A673 (cell line): ENCODE measurements at regions of chr1 and their contacts with region 1.

Region 1: GRCh38 chr1:115771847-115772457 is 3.4 kb upstream of the CASQ2 start:
- DNase-seq: peak; percentile 85
- H3K4me3 ChIP-seq: no peak overlapping the region
- H3K27ac ChIP-seq: no peak overlapping the region
- H3K4me1 ChIP-seq: no peaks in the 10 kb centered on the region
- H3K27me3 ChIP-seq: peaks cover 4% of the 10 kb centered on the region
- CTCF ChIP-seq: peak; percentile 77

Region 2: DNA sequence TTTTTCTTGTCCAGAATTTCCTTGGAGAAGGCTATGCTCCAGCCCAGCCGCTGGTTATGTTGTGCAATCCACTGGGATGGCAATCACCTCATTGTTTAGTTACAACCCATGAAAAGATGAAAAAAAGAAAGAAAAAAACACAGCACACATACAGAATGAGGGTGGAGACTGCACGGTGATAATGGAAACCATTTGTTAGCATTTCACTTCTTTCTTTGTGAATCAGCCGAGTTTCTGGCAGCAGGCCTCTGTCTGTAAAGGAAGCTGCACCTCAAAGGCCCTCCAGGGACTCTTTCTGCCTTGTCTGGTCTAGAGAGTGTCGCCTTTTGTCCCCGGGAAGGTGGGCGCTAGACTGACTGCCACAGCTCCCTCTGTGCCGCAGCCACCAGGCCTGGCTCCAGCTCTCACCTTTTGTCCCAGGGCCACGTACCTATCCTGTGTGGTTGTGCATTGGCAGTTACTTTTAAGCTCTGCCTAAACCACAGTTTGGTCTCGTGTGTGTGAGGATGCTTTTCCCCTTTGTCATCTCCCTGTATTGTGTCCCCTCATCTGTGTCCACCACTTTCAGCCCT is 469.5 kb before region 1 on chr1:
- CTCF ChIA-PET with region 1: no interaction called
- POLR2A ChIA-PET with region 1: no interaction called
- intact Hi-C with region 1: no loop called
- DNase-seq: peak; percentile 42
- H3K4me3 ChIP-seq: no peak overlapping the region
- H3K27ac ChIP-seq: no peak overlapping the region
- H3K4me1 ChIP-seq: peaks cover 4% of the 10 kb centered on the region
- H3K27me3 ChIP-seq: no peaks in the 10 kb centered on the region
- CTCF ChIP-seq: no peak

Region 3: DNA sequence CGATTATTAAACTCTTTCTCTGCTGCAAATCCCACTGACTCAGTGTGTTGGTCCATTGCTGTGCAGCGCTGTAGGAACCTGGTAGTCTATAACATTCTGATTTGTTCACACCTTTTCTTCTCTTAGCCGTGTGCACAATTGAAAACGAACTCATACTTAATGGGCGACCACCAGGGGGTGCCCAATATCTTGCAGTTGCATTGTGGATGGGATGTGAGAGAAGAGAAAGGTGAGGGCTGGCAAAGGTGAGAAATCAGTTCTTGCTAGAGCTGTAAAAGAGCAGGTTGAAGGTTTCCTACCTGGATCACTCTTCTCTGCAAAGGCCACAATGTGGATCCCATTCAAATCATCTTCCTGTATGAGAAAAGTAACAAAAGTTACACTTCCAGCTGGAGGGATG is 54.4 kb before region 1 on chr1:
- CTCF ChIA-PET with region 1: no interaction called
- POLR2A ChIA-PET with region 1: no interaction called
- intact Hi-C with region 1: loop called (anchors 1 kb)
- DNase-seq: peak; percentile 23
- H3K4me3 ChIP-seq: no peak overlapping the region
- H3K27ac ChIP-seq: no peak overlapping the region
- H3K4me1 ChIP-seq: no peaks in the 10 kb centered on the region
- H3K27me3 ChIP-seq: no peaks in the 10 kb centered on the region
- CTCF ChIP-seq: peak; percentile 66

Region 4: DNA sequence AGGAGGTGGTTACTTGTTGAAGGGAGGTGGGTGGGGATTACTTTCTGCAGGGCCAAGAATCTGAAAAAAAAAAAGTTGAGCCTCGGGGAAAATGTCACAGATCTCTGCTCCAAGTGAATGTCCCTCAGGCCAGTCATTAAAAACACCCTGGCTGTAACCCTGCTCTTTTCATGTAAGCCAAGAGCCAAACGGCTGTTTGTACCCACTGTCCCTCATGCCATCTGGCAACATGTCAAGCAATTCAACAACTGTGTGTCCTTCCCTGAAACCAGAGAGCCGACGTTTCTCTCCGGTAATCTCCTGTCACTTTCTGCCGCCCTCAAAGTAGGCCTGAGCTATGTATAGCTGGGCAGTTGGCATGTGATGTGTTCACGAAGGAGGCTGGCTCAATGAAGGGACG is 18.1 kb before region 1 on chr1:
- CTCF ChIA-PET with region 1: interaction called, 10 read pairs
- POLR2A ChIA-PET with region 1: no interaction called
- intact Hi-C with region 1: no loop called
- DNase-seq: no peak
- H3K4me3 ChIP-seq: no peak overlapping the region
- H3K27ac ChIP-seq: no peak overlapping the region
- H3K4me1 ChIP-seq: no peaks in the 10 kb centered on the region
- H3K27me3 ChIP-seq: peaks cover 5% of the 10 kb centered on the region
- CTCF ChIP-seq: no peak

Region 5: GRCh38 chr1:115880981-115881672 is 109.2 kb after region 1 on chr1:
- CTCF ChIA-PET with region 1: interaction called, 10 read pairs
- POLR2A ChIA-PET with region 1: no interaction called
- intact Hi-C with region 1: no loop called
- DNase-seq: no peak
- H3K4me3 ChIP-seq: no peak overlapping the region
- H3K27ac ChIP-seq: no peak overlapping the region
- H3K4me1 ChIP-seq: peaks cover 4% of the 10 kb centered on the region
- H3K27me3 ChIP-seq: no peaks in the 10 kb centered on the region
- CTCF ChIP-seq: no peak